ENCODE measurements at regions of chr15 and their contacts with region 1.

Region 1: DNA sequence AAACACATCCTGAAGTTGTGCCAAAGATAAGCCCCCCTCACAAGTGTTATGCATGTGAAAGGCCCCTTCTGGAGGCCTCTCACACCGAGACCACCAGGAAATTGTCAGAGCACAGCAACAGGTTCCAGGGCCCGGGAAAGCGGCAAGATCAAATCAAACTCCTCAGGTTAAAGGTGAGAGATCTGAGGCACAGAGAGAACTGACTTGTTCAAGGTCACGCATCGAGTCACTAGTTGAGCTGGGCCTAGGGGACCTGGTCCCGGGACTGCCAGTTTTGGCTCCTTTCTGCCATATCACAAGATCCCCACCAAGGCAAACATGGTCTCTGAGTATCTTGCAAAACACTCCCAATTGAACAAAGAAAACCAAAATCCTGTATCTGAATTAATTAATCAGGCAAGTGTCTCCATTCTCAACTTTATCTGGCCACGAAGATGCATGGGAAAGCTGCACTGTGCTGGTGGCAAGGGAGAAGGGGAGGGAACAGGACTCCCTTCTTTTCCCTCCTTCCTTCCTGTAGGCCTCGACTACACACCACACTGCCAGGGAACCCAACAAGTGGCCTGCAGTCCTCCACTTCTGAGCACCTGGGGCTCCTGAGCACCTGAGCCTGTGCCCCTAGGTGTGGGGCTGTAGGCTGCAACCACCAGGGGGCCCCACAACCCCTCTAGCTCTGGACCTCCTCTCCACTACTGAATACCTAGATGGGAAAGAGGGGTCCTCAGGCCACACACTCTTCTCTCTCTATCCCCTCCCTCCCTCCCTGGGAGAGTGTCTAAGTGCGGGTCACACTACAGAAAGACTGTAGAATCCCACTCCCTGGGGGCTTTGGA is 37.3 kb downstream of the ANP32A start:
- DNase-seq: peak; percentile 42 to 66 (median 59)
- ATAC-seq: peak; percentile 85
- H3K4me3 ChIP-seq: no peak overlapping the region
- H3K4me3 Mint-ChIP-seq: peak overlapping the region in 4 of 10 donors; percentile 47 to 67 (median 55)
- H3K27ac ChIP-seq: no peak overlapping the region
- H3K27ac Mint-ChIP-seq: peak overlapping the region; percentile 12 to 85 (median 71)
- H3K4me1 ChIP-seq: peaks cover 5 to 17% of the 10 kb centered on the region in 2 donors
- H3K4me1 Mint-ChIP-seq: peaks cover 22 to 51% (median 32%) of the 10 kb centered on the region in 7 donors
- H3K27me3 ChIP-seq: no peaks in the 10 kb centered on the region
- H3K27me3 Mint-ChIP-seq: no peaks in the 10 kb centered on the region

Region 2: DNA sequence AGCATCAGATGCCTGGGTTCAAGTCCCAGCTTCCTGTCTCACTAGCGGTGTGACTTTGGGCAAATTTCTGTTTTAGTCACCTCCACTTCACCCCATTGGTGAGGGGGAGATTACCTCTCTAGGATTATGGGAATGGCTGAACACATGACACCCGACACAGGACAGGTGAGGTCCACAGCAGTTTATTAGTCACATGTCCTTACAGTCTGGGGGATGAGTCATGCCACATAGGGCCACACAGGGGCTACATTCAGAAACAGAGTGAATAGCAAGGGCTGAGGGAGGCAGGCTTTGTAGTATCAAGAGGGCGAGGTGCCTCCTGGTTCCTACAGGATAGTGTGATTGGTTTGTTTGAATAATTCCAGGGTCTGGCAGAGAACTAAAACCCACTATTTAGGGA is 336.2 kb before region 1 on chr15:
- CTCF ChIA-PET with region 1: no interaction called
- POLR2A ChIA-PET with region 1: no interaction called
- intact Hi-C with region 1: no loop called
- DNase-seq: no peak
- ATAC-seq: no peak
- H3K4me3 ChIP-seq: no peak overlapping the region
- H3K4me3 Mint-ChIP-seq: no peak overlapping the region
- H3K27ac ChIP-seq: no peak overlapping the region
- H3K27ac Mint-ChIP-seq: no peak overlapping the region
- H3K4me1 ChIP-seq: no peaks in the 10 kb centered on the region
- H3K4me1 Mint-ChIP-seq: no peaks in the 10 kb centered on the region
- H3K27me3 ChIP-seq: peaks cover 0 to 8% of the 10 kb centered on the region in 2 donors
- H3K27me3 Mint-ChIP-seq: peaks cover 51 to 69% (median 61%) of the 10 kb centered on the region in 5 donors

Region 3: GRCh38 chr15:68559345-68560310 is 223.8 kb before region 1 on chr15:
- CTCF ChIA-PET with region 1: no interaction called
- POLR2A ChIA-PET with region 1: no interaction called
- intact Hi-C with region 1: loop called in 1 of 2 experiments (anchors 2 kb)
- DNase-seq: peak; percentile 45 to 82 (median 72)
- ATAC-seq: peak; percentile 93
- H3K4me3 ChIP-seq: peak overlapping the region; percentile 49
- H3K4me3 Mint-ChIP-seq: peak overlapping the region; percentile 42 to 93 (median 84)
- H3K27ac ChIP-seq: no peak overlapping the region
- H3K27ac Mint-ChIP-seq: peak overlapping the region in 1 of 9 donors; percentile 65
- H3K4me1 ChIP-seq: peaks cover 4 to 9% of the 10 kb centered on the region in 2 donors
- H3K4me1 Mint-ChIP-seq: peaks cover 14 to 22% (median 17%) of the 10 kb centered on the region in 7 donors
- H3K27me3 ChIP-seq: peaks cover 0 to 4% of the 10 kb centered on the region in 2 donors
- H3K27me3 Mint-ChIP-seq: peaks cover 54 to 67% (median 56%) of the 10 kb centered on the region in 5 donors

Region 4: GRCh38 chr15:68795298-68795848 is 11.9 kb after region 1 on chr15:
- CTCF ChIA-PET with region 1: interaction called, 28 read pairs
- POLR2A ChIA-PET with region 1: interaction called, 3 read pairs
- intact Hi-C with region 1: loop called in 1 of 2 experiments (anchors 2 kb)
- DNase-seq: peak; percentile 48 to 78 (median 67)
- ATAC-seq: peak; percentile 85
- H3K4me3 ChIP-seq: no peak overlapping the region
- H3K4me3 Mint-ChIP-seq: peak overlapping the region; percentile 46 to 79 (median 68)
- H3K27ac ChIP-seq: peak overlapping the region; percentile 50
- H3K27ac Mint-ChIP-seq: peak overlapping the region; percentile 44 to 91 (median 87)
- H3K4me1 ChIP-seq: peaks cover 63 to 72% of the 10 kb centered on the region in 2 donors
- H3K4me1 Mint-ChIP-seq: peaks cover 81 to 100% (median 96%) of the 10 kb centered on the region in 7 donors
- H3K27me3 ChIP-seq: no peaks in the 10 kb centered on the region
- H3K27me3 Mint-ChIP-seq: no peaks in the 10 kb centered on the region

Region 5: GRCh38 chr15:68829068-68829467 is 45.6 kb after region 1 on chr15:
- CTCF ChIA-PET with region 1: interaction called, 33 read pairs
- POLR2A ChIA-PET with region 1: interaction called, 3 read pairs
- intact Hi-C with region 1: loop called (anchors 1 kb)
- DNase-seq: peak in 6 of 9 donors; percentile 17 to 41 (median 22)
- ATAC-seq: peak; percentile 85
- H3K4me3 ChIP-seq: no peak overlapping the region
- H3K4me3 Mint-ChIP-seq: no peak overlapping the region
- H3K27ac ChIP-seq: no peak overlapping the region
- H3K27ac Mint-ChIP-seq: no peak overlapping the region
- H3K4me1 ChIP-seq: peaks cover 0 to 4% of the 10 kb centered on the region in 2 donors
- H3K4me1 Mint-ChIP-seq: peaks cover 9 to 28% (median 19%) of the 10 kb centered on the region in 7 donors
- H3K27me3 ChIP-seq: no peaks in the 10 kb centered on the region
- H3K27me3 Mint-ChIP-seq: peaks cover 0 to 11% (median 0%) of the 10 kb centered on the region in 5 donors

Measured in naive thymus-derived CD4-positive, alpha-beta T cell (primary cell).